ENCODE measurements at regions of chr4 and their contacts with region 1.

Region 1: DNA sequence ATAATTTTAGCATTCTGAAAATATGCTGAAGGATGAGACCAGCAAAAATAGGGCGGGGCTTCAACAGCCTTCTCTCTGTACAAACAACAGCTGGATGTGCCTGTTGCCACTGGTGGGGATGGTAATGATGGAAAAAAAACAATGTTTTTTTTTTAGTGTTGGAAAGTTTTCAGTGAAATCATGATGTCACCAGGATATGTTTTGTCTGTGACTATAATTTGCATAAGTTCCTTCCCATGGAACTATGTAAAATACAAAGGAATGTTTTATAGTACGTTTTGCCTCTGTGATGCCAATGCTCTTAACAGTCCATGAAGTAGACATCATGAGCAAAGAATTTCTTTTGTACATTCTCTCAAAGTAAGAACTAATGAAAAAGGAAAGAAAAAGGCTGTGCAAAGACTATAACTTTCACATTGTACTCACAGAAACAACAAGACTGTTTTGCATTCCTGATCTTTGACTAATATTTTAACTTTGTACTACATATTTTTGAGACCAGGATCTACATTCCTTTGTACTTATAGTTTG is 589.7 kb downstream of the SPRY1 start:
- DNase-seq: no peak
- ATAC-seq: no peak
- H3K4me3 ChIP-seq: no peak overlapping the region
- H3K27ac ChIP-seq: no peak overlapping the region
- H3K4me1 ChIP-seq: no peaks in the 10 kb centered on the region
- H3K27me3 ChIP-seq: 0 out of 5 replicates have a peak, but pooled peaks cover 0 to 4% of the 10 kb centered on the region in 2 experiments
- CTCF ChIP-seq: no peak
- EP300 ChIP-seq: no peak
- POLR2A ChIP-seq: no peak
- RAD21 ChIP-seq: no peak

Region 2: GRCh38 chr4:123776254-123776653 is 210.1 kb before region 1 on chr4:
- CTCF ChIA-PET with region 1: no interaction called
- POLR2A ChIA-PET with region 1: no interaction called
- in situ Hi-C with region 1: loop called (anchors 5 kb)
- intact Hi-C with region 1: loop called (anchors 1 kb)
- DNase-seq: no peak
- ATAC-seq: no peak
- H3K4me3 ChIP-seq: no peak overlapping the region
- H3K27ac ChIP-seq: no peak overlapping the region
- H3K4me1 ChIP-seq: no peaks in the 10 kb centered on the region
- H3K27me3 ChIP-seq: no peaks in the 10 kb centered on the region
- CTCF ChIP-seq: no peak
- EP300 ChIP-seq: no peak
- POLR2A ChIP-seq: no peak
- RAD21 ChIP-seq: no peak

Region 3: DNA sequence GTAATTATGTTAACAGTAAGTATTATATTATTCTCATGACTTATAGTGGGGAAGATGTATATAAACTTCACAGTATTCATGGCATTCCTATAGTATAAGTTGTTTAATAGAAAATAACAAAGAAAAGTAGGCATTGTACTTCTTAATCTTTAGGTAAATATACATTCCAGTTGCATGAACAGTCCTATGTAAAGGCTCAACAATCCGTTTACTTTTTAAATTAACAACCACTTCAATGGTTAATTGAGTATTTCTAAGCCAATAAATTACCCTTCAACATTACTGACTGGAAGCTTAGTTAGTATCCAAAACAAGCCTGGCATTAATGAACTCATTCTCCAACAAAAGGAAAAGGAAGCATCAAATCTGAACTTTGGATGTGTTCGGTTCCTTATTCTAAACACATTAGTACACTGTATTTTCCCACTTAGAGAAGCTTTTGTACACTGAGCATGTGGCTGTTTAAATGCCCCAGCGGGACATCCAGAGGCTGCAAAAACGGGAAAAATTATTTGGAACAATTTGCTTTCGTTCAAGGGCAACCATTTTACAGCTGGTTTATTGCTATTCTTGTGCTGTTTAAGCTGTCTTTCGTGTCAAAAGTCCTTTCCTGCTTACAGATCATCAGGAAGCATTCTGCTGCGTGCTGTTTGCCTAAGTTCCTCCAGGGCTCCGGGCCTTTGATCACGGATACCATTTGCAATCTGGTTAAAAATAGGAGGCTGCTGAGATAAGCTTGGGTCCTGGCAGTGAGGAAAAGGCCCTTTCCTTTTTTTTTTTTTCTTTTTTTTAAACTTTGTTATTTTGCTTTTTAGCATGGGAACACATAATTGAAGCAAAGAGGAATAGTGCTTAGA is 129.4 kb before region 1 on chr4:
- CTCF ChIA-PET with region 1: no interaction called
- POLR2A ChIA-PET with region 1: no interaction called
- in situ Hi-C with region 1: no loop called
- intact Hi-C with region 1: loop called (anchors 10 kb)
- DNase-seq: peak; percentile 95
- ATAC-seq: peak; percentile 99
- H3K4me3 ChIP-seq: peak overlapping the region; percentile 42 to 65 (median 51); a peak in 5 of 6 replicates
- H3K27ac ChIP-seq: peak overlapping the region; percentile 95
- H3K4me1 ChIP-seq: peaks cover 72% of the 10 kb centered on the region
- H3K27me3 ChIP-seq: no peaks in the 10 kb centered on the region
- CTCF ChIP-seq: peak; percentile 11; the same call in 1 of the 2 replicates
- EP300 ChIP-seq: peak; percentile 32 to 89; a peak in 3 of 4 replicates
- POLR2A ChIP-seq: no peak
- RAD21 ChIP-seq: no peak

Measured in HepG2 (cell line).